Right lobe of liver (tissue), 6 donors: ENCODE measurements at regions of chr18 and their contacts with region 1.

Region 1: DNA sequence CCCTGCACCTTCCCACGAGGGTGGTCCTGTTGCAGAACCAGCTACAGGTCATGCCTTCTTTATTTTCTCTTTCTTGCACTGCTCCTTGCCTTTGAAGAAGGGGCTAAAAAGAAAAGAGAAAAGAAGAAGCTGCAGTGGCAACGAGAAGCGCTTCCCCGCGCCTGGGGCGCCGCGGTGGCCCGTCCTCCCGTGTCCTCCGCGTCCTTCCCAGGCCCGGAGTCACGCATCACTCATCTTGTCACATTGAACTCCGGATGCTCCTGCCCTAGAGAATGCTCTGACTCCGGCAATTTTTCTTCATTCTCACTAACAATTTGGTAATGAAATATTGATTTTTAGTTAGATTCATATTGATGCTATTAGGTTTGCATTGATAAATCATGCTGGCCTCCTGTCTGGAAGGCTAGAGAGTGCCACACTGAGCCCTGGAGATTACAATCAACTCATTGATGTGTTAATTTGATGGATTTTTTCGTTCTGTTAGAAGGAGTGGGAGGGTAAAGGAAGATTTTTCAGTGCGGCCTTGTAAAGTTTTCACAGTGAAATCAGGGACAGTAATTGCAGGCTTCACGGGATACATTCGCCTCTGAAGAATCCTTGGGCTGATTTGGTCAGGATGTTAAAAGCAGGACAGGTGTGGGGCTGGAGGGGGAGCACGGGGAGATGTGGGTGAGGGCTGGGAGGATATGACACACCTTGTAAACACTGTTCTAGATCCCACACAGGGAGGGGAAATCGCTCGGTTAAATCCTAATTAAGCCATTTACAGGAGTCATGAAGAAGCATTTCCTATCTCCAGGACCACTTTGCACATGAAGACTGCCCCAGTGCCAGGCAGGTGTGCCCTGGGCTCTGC is 349.3 kb downstream of the ZNF516 start:
- DNase-seq: no peak
- ATAC-seq: no peak
- H3K4me3 ChIP-seq: no peak overlapping the region
- H3K27ac ChIP-seq: no peak overlapping the region
- H3K4me1 ChIP-seq: no peaks in the 10 kb centered on the region
- H3K27me3 ChIP-seq: no peaks in the 10 kb centered on the region
- CTCF ChIP-seq: no peak
- POLR2A ChIP-seq: no peak

Region 2: GRCh38 chr18:75489493-75490190 is 656.1 kb before region 1 on chr18:
- intact Hi-C with region 1: no loop called
- DNase-seq: no peak
- ATAC-seq: no peak
- H3K4me3 ChIP-seq: no peak overlapping the region
- H3K27ac ChIP-seq: no peak overlapping the region
- H3K4me1 ChIP-seq: no peaks in the 10 kb centered on the region
- H3K27me3 ChIP-seq: no peaks in the 10 kb centered on the region
- CTCF ChIP-seq: no peak
- POLR2A ChIP-seq: no peak

Region 3: DNA sequence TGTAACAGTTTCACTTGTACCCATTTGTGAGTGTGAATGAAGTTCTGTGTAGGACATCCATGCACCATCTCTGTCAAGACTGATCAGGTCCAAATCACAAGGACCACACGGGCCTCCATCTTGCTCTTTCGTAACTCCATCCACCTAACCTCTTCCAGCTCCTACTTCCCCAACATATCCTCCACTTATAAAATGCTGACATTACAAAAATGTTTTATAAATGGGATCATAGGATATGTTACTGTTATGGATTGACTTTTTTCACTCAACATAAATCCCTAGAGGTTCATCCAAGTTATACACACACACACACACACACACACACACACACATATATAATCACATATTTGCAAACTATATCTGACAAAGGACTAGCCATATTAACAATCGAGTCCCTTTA is 127.5 kb before region 1 on chr18:
- intact Hi-C with region 1: loop called in 1 of 2 experiments (anchors 10 kb)
- DNase-seq: no peak
- ATAC-seq: no peak
- H3K4me3 ChIP-seq: no peak overlapping the region
- H3K27ac ChIP-seq: no peak overlapping the region
- H3K4me1 ChIP-seq: no peaks in the 10 kb centered on the region
- H3K27me3 ChIP-seq: no peaks in the 10 kb centered on the region
- CTCF ChIP-seq: no peak
- POLR2A ChIP-seq: no peak

Region 4: DNA sequence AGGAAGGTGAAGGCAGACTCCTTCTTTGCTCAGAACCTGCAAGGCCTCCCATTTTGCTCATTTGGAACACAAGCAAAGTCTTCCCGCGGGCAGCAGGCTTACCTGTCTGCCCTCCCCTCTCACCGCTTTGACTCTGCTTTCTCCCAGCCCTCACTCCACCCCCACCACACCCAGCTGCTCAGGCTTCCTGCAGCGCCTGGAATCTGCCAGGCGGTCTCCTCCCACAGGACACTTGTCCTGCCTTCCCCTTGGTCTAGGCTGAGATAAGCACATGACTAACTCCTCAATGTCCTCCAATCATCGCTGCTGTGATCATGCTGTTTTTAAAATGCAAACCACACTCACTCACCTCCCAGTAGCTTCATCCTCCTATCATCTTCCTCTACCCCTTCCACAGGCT is 80.8 kb before region 1 on chr18:
- intact Hi-C with region 1: no loop called
- DNase-seq: no peak
- ATAC-seq: no peak
- H3K4me3 ChIP-seq: no peak overlapping the region
- H3K27ac ChIP-seq: no peak overlapping the region
- H3K4me1 ChIP-seq: no peaks in the 10 kb centered on the region
- H3K27me3 ChIP-seq: no peaks in the 10 kb centered on the region
- CTCF ChIP-seq: no peak
- POLR2A ChIP-seq: no peak

Region 5: DNA sequence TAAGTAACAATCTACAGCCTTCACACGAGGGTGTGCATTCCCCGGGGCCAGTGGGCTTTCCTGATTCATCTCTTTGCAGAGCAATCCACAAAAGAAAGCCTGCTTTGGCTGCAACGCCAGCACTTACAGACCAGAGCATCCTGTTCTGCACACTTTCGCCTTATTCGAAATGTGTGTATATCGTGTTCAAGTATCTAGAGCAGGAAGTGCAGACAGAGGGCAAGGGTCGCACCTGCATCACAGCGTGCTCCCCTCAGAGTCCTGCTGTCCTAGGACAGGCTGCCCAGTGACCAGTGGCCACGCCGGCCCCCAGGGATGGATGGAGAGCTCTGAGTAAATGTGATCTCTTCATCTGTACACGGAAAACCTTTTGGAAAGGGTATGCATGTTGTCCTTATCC is 85.0 kb after region 1 on chr18:
- intact Hi-C with region 1: no loop called
- DNase-seq: no peak
- ATAC-seq: no peak
- H3K4me3 ChIP-seq: no peak overlapping the region
- H3K27ac ChIP-seq: no peak overlapping the region
- H3K4me1 ChIP-seq: no peaks in the 10 kb centered on the region
- H3K27me3 ChIP-seq: no peaks in the 10 kb centered on the region
- CTCF ChIP-seq: no peak
- POLR2A ChIP-seq: no peak